ENCODE measurements at regions of chr3 and their contacts with region 1.

Region 1: GRCh38 chr3:179825519-179826246 is 172.8 kb downstream of the USP13 start:
- DNase-seq: no peak
- ATAC-seq: no peak
- H3K4me3 ChIP-seq: no peak overlapping the region
- H3K27ac ChIP-seq: no peak overlapping the region
- H3K4me1 ChIP-seq: no peaks in the 10 kb centered on the region
- H3K27me3 ChIP-seq: peaks cover 0 to 10% (median 3%) of the 10 kb centered on the region in 3 donors
- CTCF ChIP-seq: no peak

Region 2: DNA sequence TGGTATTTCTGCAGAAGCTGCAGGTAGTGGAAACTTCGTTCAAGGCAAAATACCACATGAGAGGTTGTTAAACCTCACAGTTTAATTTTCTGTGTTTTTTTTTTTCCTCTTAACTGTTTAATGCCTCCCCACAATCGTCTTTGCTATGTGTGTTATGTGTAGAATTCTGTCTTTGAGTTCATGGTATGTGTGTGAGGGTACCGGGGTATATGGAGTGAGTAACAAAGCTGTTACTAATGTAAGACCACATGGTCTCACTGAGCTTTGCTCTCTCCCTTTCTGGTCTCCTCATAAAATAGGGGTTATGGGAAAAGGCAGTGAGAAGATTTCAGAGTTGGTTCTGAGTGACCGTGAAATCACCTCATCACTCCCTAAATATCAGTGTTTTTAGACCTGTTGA is 29.3 kb before region 1 on chr3:
- intact Hi-C with region 1: loop called in 1 of 2 experiments (anchors 1 kb)
- DNase-seq: no peak
- ATAC-seq: no peak
- H3K4me3 ChIP-seq: no peak overlapping the region
- H3K27ac ChIP-seq: no peak overlapping the region
- H3K4me1 ChIP-seq: peaks cover 5% of the 10 kb centered on the region
- H3K27me3 ChIP-seq: no peaks in the 10 kb centered on the region
- CTCF ChIP-seq: no peak